ENCODE measurements at regions of chr12 and their contacts with region 1.

Region 1: DNA sequence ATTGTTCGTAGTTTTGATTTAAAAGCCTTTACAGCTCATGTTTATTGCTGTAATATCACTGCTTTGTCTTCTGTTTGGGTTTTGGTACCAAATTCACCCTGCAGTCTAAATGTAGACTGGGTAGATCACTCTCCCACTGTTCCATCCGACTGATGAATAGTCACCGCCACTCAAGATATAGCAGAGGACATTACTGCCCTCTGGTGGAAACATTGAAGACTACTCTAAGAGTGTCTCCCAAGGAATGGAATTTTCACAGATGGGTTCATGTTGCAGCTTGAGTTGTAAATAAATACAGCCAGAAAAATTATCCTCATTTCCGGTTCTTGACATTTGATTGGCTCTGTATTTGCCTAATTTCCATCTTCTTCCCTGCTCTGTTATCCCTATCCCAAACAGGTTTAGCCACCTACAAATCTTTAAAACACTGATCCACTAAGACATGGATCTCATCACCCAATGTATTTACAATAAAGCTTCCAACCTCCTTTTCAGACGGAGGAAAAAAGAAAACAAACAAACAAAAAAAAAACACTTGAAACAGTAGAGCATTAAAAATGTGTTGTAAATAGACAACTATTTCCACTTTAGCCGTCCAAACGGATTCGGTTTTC is 198.3 kb upstream of the CPNE8 start:
- DNase-seq: peak in 4 of 14 experiments; percentile 3 to 59 (median 50)
- ATAC-seq: peak; percentile 51
- H3K4me3 ChIP-seq: no peak overlapping the region
- H3K4me3 Mint-ChIP-seq: no peak overlapping the region
- H3K27ac ChIP-seq: no peak overlapping the region
- H3K27ac Mint-ChIP-seq: no peak overlapping the region
- H3K4me1 ChIP-seq: no peaks in the 10 kb centered on the region
- H3K4me1 Mint-ChIP-seq: no peaks in the 10 kb centered on the region
- H3K27me3 ChIP-seq: no peaks in the 10 kb centered on the region
- H3K27me3 Mint-ChIP-seq: no peaks in the 10 kb centered on the region
- CTCF ChIP-seq: peak; percentile 53

Region 2: DNA sequence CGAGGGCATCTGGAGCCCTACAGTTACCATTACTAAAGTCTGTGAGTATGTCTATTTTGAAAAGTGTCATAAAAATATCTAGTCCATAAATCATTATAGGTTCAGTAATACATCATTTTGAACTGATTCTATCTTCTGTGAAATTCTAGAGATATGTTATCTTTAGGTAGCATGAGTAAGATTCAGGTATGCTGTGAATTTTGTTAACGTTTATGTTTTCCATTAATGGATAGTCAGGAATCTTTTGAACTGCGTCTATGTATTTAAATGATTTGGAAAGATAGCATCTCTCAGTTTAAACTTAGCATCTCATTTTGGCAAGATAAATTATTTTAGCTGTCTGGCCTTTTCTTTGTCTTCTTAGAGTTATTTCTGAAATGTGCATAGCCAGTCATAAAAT is 778.8 kb before region 1 on chr12:
- CTCF ChIA-PET with region 1: no interaction called
- POLR2A ChIA-PET with region 1: no interaction called
- intact Hi-C with region 1: loop called in 1 of 2 experiments (anchors 5 kb)
- DNase-seq: no peak
- ATAC-seq: no peak
- H3K4me3 ChIP-seq: no peak overlapping the region
- H3K4me3 Mint-ChIP-seq: no peak overlapping the region
- H3K27ac ChIP-seq: no peak overlapping the region
- H3K27ac Mint-ChIP-seq: no peak overlapping the region
- H3K4me1 ChIP-seq: no peaks in the 10 kb centered on the region
- H3K4me1 Mint-ChIP-seq: peaks cover 5% of the 10 kb centered on the region
- H3K27me3 ChIP-seq: no peaks in the 10 kb centered on the region
- H3K27me3 Mint-ChIP-seq: no peaks in the 10 kb centered on the region
- CTCF ChIP-seq: no peak

Region 3: DNA sequence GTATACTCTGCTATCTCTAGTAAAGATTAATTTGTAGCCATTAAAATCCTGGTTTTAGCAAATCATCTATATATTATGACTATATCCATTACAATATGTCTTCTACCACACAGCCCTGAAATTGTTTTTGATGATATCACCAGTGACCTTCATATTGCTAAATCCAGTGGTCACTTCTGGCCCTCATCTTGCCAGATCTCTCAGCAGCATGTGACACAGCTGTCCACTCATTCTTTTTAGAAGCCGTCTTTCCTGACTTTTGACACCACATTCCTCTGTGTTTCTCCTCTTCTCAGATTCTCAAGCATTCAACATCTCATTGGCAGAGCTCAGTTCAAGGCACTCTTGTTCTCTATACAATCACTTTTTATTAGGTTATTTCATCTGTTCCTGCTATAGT is 253.2 kb before region 1 on chr12:
- CTCF ChIA-PET with region 1: no interaction called
- POLR2A ChIA-PET with region 1: no interaction called
- intact Hi-C with region 1: no loop called
- DNase-seq: no peak
- ATAC-seq: no peak
- H3K4me3 ChIP-seq: no peak overlapping the region
- H3K4me3 Mint-ChIP-seq: no peak overlapping the region
- H3K27ac ChIP-seq: no peak overlapping the region
- H3K27ac Mint-ChIP-seq: no peak overlapping the region
- H3K4me1 ChIP-seq: no peaks in the 10 kb centered on the region
- H3K4me1 Mint-ChIP-seq: no peaks in the 10 kb centered on the region
- H3K27me3 ChIP-seq: no peaks in the 10 kb centered on the region
- H3K27me3 Mint-ChIP-seq: no peaks in the 10 kb centered on the region
- CTCF ChIP-seq: no peak

Region 4: DNA sequence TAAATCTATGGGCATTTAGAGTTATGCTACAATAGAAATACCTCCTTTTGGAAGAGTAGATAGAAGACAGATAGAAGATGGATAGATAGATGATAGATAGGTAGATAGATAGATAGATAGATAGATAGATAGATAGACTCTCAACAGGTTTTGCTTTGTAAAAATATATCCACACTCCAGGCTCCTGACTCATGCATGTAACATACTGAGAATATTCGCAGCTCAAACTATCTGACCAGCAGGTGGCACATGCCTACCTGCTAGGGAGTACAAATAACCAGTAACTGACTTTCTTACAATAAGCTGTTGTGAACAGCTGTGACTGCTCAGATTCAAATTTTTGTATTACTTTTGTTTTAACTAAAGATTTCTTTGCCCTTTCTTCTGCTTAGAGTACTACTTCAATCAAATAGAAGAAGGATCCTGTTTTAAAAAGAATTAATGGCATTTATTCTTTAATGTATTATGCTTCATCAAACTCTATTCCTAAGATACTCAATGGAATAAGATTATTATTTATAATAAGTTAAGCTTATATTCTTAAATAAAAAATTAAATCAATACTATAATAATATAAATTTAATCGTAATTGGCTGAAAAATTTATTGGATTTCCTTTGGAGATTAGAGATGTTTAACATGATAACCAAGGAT is 182.5 kb before region 1 on chr12:
- CTCF ChIA-PET with region 1: no interaction called
- POLR2A ChIA-PET with region 1: no interaction called
- intact Hi-C with region 1: loop called in 1 of 2 experiments (anchors 5 kb)
- DNase-seq: peak in 5 of 14 experiments; percentile 15 to 51 (median 31)
- ATAC-seq: no peak
- H3K4me3 ChIP-seq: no peak overlapping the region
- H3K4me3 Mint-ChIP-seq: no peak overlapping the region
- H3K27ac ChIP-seq: no peak overlapping the region
- H3K27ac Mint-ChIP-seq: no peak overlapping the region
- H3K4me1 ChIP-seq: no peaks in the 10 kb centered on the region
- H3K4me1 Mint-ChIP-seq: no peaks in the 10 kb centered on the region
- H3K27me3 ChIP-seq: no peaks in the 10 kb centered on the region
- H3K27me3 Mint-ChIP-seq: peaks cover 4% of the 10 kb centered on the region
- CTCF ChIP-seq: peak; percentile 58

Region 5: DNA sequence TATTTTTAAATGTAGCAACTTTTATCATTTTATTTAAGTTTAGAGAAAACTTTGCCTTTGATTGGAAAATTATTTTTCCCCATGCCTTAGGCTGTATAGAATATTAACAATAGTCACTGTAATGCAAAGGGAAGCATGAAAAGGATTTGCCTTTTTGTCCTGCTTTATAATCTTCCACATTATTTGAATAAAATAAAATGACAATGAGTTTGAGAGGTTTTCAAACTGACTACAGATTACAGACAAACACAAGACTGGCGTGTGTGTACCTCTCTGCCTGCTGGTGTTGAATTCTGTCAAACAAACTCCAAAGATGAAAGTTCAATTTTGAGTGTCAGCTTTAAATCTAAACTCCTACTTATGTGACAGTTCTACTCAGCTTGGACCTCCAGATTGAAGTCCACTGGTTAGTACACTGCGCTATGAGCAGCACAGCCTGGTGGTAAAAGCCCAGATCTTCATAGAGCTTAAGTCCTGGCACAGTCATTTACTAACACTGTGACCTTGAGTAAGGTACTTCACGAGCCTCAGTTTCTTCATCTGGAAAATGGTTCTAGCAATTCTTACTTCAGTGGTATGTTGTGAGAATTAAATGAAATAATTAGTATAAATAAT is 100.0 kb before region 1 on chr12:
- CTCF ChIA-PET with region 1: no interaction called
- POLR2A ChIA-PET with region 1: no interaction called
- intact Hi-C with region 1: no loop called
- DNase-seq: no peak
- ATAC-seq: no peak
- H3K4me3 ChIP-seq: no peak overlapping the region
- H3K4me3 Mint-ChIP-seq: no peak overlapping the region
- H3K27ac ChIP-seq: no peak overlapping the region
- H3K27ac Mint-ChIP-seq: no peak overlapping the region
- H3K4me1 ChIP-seq: no peaks in the 10 kb centered on the region
- H3K4me1 Mint-ChIP-seq: no peaks in the 10 kb centered on the region
- H3K27me3 ChIP-seq: no peaks in the 10 kb centered on the region
- H3K27me3 Mint-ChIP-seq: no peaks in the 10 kb centered on the region
- CTCF ChIP-seq: no peak

Region 6: DNA sequence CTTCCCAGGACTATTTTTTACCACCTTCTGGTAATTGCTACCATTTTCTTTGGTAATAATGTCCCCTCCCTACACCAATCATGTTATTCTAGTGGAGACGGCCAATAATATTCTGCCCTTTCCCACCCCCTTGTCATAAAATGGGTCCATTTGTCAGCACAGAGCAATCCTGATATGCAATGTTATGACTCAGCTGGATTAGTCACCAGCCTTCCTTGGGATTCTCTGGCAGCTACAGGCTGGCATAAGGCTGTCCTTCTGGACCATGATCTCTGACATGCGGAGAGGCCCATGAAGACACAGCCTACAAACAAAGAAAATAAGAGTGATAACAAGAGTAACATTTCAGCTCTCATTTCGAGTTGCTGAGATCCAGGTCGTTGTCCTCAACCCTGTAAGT is 23.7 kb after region 1 on chr12:
- CTCF ChIA-PET with region 1: no interaction called
- POLR2A ChIA-PET with region 1: no interaction called
- intact Hi-C with region 1: no loop called
- DNase-seq: no peak
- ATAC-seq: no peak
- H3K4me3 ChIP-seq: no peak overlapping the region
- H3K4me3 Mint-ChIP-seq: no peak overlapping the region
- H3K27ac ChIP-seq: no peak overlapping the region
- H3K27ac Mint-ChIP-seq: no peak overlapping the region
- H3K4me1 ChIP-seq: no peaks in the 10 kb centered on the region
- H3K4me1 Mint-ChIP-seq: no peaks in the 10 kb centered on the region
- H3K27me3 ChIP-seq: no peaks in the 10 kb centered on the region
- H3K27me3 Mint-ChIP-seq: no peaks in the 10 kb centered on the region
- CTCF ChIP-seq: no peak

Region 7: GRCh38 chr12:39165338-39165737 is 61.7 kb after region 1 on chr12:
- CTCF ChIA-PET with region 1: no interaction called
- POLR2A ChIA-PET with region 1: no interaction called
- intact Hi-C with region 1: no loop called
- DNase-seq: no peak
- ATAC-seq: no peak
- H3K4me3 ChIP-seq: no peak overlapping the region
- H3K4me3 Mint-ChIP-seq: no peak overlapping the region
- H3K27ac ChIP-seq: no peak overlapping the region
- H3K27ac Mint-ChIP-seq: no peak overlapping the region
- H3K4me1 ChIP-seq: no peaks in the 10 kb centered on the region
- H3K4me1 Mint-ChIP-seq: no peaks in the 10 kb centered on the region
- H3K27me3 ChIP-seq: no peaks in the 10 kb centered on the region
- H3K27me3 Mint-ChIP-seq: no peaks in the 10 kb centered on the region
- CTCF ChIP-seq: no peak

Measured in CD4-positive, alpha-beta T cell (primary cell).